ENCODE measurements at regions of chr13 and their contacts with region 1.

Region 1: DNA sequence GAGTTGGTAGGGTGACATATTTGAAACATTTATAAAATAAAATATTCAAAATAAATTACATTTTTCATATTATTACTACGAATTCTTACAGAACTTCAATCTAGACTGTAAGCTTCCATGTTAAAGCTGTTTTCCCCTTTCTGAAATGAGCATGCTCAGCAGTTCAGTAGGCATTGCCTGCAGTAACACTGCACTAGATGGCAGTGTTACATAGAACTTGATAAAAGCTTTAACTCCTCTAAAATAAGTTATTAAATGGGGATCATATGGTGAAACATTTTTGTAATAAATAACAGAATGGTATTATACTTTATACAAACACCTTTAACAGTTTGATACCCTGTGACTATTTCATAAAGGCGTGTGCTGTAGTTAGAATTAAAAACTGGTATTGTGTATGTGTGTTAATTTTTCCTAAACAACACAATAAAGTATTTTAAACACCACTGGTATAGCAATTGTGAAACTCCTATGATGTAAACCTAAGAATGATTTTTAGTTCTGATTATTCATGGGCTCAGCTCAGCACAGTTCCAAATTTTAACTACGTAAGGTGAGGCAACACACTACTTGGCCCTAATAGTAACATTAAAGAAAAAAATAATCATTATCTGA is 11.6 kb upstream of the GPR18 start:
- DNase-seq: no peak
- ATAC-seq: peak; percentile 89
- H3K4me3 ChIP-seq: no peak overlapping the region
- H3K27ac ChIP-seq: peak overlapping the region; percentile 37; the same call in 1 of the 2 replicates
- H3K4me1 ChIP-seq: peaks cover 24% of the 10 kb centered on the region
- H3K27me3 ChIP-seq: no peaks in the 10 kb centered on the region
- CTCF ChIP-seq: peak; percentile 74 to 85 (median 81)
- EP300 ChIP-seq: no peak
- POLR2A ChIP-seq: no peak
- RAD21 ChIP-seq: peak; percentile 91

Region 2: GRCh38 chr13:98664039-98664438 is 605.7 kb before region 1 on chr13:
- CTCF ChIA-PET with region 1: no interaction called
- POLR2A ChIA-PET with region 1: no interaction called
- RAD21 ChIA-PET with region 1: no interaction called
- SMC1A ChIA-PET with region 1: no interaction called
- in situ Hi-C with region 1: no loop called
- intact Hi-C with region 1: no loop called
- DNase-seq: no peak
- ATAC-seq: peak; percentile 29
- H3K4me3 ChIP-seq: no peak overlapping the region
- H3K27ac ChIP-seq: no peak overlapping the region
- H3K4me1 ChIP-seq: no peaks in the 10 kb centered on the region
- H3K27me3 ChIP-seq: no peaks in the 10 kb centered on the region
- CTCF ChIP-seq: no peak
- EP300 ChIP-seq: no peak
- POLR2A ChIP-seq: no peak
- RAD21 ChIP-seq: no peak

Region 3: DNA sequence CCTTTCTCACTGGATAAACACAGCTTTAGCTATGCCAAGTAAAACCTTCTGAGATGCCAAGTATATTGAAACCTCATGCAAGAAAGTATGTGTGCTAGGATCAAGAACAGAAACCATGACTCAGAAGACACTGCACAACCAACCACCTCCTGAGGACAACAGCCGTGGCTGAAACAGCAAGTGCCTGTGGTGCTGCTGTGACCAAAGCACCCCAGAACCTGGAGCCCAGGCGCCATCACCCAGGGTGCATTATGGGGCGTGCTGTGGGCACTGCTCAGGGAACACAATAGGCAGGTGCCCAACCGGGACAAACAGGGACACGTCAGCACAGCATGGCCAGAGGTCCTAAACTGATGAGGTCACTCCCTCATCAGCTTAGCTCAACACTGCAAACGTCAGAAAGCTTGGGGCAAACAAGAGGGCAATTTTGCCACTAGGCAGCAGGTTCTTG is 415.9 kb before region 1 on chr13:
- CTCF ChIA-PET with region 1: interaction called, 4 read pairs
- POLR2A ChIA-PET with region 1: no interaction called
- RAD21 ChIA-PET with region 1: no interaction called
- SMC1A ChIA-PET with region 1: interaction called, 3 read pairs
- in situ Hi-C with region 1: loop called (anchors 10 kb)
- intact Hi-C with region 1: no loop called
- DNase-seq: peak; percentile 80
- ATAC-seq: peak; percentile 100
- H3K4me3 ChIP-seq: no peak overlapping the region
- H3K27ac ChIP-seq: no peak overlapping the region
- H3K4me1 ChIP-seq: peaks cover 9% of the 10 kb centered on the region
- H3K27me3 ChIP-seq: no peaks in the 10 kb centered on the region
- CTCF ChIP-seq: no peak
- EP300 ChIP-seq: peak in 1 of 2 experiments; percentile 38; a peak in 2 of 4 replicates
- POLR2A ChIP-seq: no peak
- RAD21 ChIP-seq: no peak

Region 4: DNA sequence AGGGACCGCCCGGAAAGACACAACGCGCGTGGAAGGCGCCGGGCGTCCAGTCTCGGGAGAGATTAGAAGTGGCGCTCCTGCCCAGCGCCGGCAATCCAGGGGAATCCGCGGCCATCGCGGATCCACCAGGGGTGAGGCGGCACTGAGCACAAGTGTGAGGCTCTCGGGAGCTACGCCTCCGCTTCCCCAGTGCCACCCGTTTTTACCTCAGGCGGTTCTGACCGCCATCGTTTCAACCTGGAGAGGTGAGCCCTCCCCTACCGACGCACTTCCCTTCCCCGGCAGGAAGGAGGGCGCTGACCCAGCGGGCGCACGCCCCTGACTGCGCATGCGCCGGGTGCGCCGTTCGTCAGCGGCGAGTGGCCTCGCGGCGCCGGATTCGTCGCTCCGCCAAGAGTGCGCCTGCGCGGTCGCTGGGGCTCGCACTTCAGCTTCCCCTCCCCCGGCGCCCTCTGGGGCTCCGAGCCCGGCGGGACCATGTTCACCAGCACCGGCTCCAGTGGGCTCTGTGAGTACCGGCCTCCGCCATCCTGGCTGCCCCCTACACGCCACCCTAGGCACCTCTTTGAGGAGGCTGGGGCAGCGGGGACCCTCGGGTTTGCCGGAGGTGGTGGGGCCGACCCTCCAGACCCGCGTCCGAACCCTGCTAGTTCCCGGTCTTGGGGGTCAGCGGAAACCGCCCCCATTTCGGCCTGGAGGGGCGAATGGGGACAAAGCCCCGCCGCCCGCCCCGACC is 69.1 kb before region 1 on chr13 and contains the start of gene UBAC2:
- CTCF ChIA-PET with region 1: interaction called, 172 read pairs
- POLR2A ChIA-PET with region 1: interaction called, 9 read pairs
- RAD21 ChIA-PET with region 1: interaction called, 94 read pairs
- SMC1A ChIA-PET with region 1: interaction called, 184 read pairs
- in situ Hi-C with region 1: no loop called
- intact Hi-C with region 1: no loop called
- DNase-seq: peak; percentile 89
- ATAC-seq: peak; percentile 86
- H3K4me3 ChIP-seq: peak within 1 kb of the TSS; percentile 94
- H3K27ac ChIP-seq: peak within 1 kb of the TSS; percentile 84
- H3K4me1 ChIP-seq: peaks cover 29% of the 10 kb centered on the region
- H3K27me3 ChIP-seq: no peaks in the 10 kb centered on the region
- CTCF ChIP-seq: 0 out of 6 replicates have a peak, but pooled peaks of 1 of the 3 experiments have one; percentile 2
- EP300 ChIP-seq: 0 out of 4 replicates have a peak, but pooled peaks of 1 of the 2 experiments have one; percentile 7
- POLR2A ChIP-seq: peak; percentile 100
- RAD21 ChIP-seq: no peak
- polyA plus RNA-seq, gene UBAC2: 3.0 to 4.1 TPM

Region 5: DNA sequence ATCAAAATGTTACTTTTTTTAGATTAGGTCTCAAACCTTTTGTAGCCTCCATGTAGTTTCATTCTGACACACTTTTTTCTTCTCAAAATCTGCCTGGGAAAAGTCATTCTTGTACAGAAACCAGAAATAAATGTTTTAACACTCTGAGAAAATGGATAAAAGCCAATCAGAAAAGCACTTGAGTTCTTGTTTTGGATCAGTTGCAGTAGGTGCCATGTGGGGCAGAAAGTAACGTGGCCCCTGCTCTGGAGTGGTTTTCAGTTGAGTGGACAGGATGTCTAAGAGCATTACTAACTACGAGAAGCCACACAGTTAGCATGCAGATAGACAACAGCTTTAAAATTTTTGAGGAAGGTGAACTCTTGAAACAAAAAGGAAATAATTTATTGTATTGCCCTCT is 18.4 kb after region 1 on chr13:
- CTCF ChIA-PET with region 1: interaction called, 54 read pairs
- POLR2A ChIA-PET with region 1: interaction called, 6 read pairs
- RAD21 ChIA-PET with region 1: interaction called, 106 read pairs
- SMC1A ChIA-PET with region 1: interaction called, 132 read pairs
- in situ Hi-C with region 1: no loop called
- intact Hi-C with region 1: loop called (anchors 2 kb)
- DNase-seq: peak; percentile 93
- ATAC-seq: peak; percentile 91
- H3K4me3 ChIP-seq: no peak overlapping the region
- H3K27ac ChIP-seq: peak overlapping the region; percentile 76
- H3K4me1 ChIP-seq: peaks cover 46% of the 10 kb centered on the region
- H3K27me3 ChIP-seq: no peaks in the 10 kb centered on the region
- CTCF ChIP-seq: no peak
- EP300 ChIP-seq: 0 out of 4 replicates have a peak, but pooled peaks of 1 of the 2 experiments have one; percentile 36
- POLR2A ChIP-seq: no peak
- RAD21 ChIP-seq: peak; percentile 22; the same call in 1 of the 2 replicates

Region 6: GRCh38 chr13:99331881-99332293 is 62.2 kb after region 1 on chr13:
- CTCF ChIA-PET with region 1: interaction called, 28 read pairs
- POLR2A ChIA-PET with region 1: interaction called, 6 read pairs
- RAD21 ChIA-PET with region 1: interaction called, 35 read pairs
- SMC1A ChIA-PET with region 1: interaction called, 70 read pairs
- in situ Hi-C with region 1: no loop called
- intact Hi-C with region 1: no loop called
- DNase-seq: peak; percentile 79
- ATAC-seq: peak; percentile 89
- H3K4me3 ChIP-seq: no peak overlapping the region
- H3K27ac ChIP-seq: peak overlapping the region; percentile 66; the same call in 1 of the 2 replicates
- H3K4me1 ChIP-seq: peaks cover 21% of the 10 kb centered on the region
- H3K27me3 ChIP-seq: no peaks in the 10 kb centered on the region
- CTCF ChIP-seq: no peak
- EP300 ChIP-seq: peak; percentile 39 to 52; a peak in 2 of 4 replicates
- POLR2A ChIP-seq: no peak
- RAD21 ChIP-seq: no peak

Region 7: GRCh38 chr13:99386911-99387788 is 117.4 kb after region 1 on chr13:
- CTCF ChIA-PET with region 1: interaction called, 440 read pairs
- POLR2A ChIA-PET with region 1: interaction called, 8 read pairs
- RAD21 ChIA-PET with region 1: interaction called, 182 read pairs
- SMC1A ChIA-PET with region 1: interaction called, 306 read pairs
- in situ Hi-C with region 1: no loop called
- intact Hi-C with region 1: loop called (anchors 1 kb)
- DNase-seq: peak; percentile 66
- ATAC-seq: peak; percentile 93
- H3K4me3 ChIP-seq: no peak overlapping the region
- H3K27ac ChIP-seq: peak overlapping the region; percentile 41; the same call in 1 of the 2 replicates
- H3K4me1 ChIP-seq: peaks cover 26% of the 10 kb centered on the region
- H3K27me3 ChIP-seq: no peaks in the 10 kb centered on the region
- CTCF ChIP-seq: peak; percentile 95 to 99 (median 96)
- EP300 ChIP-seq: no peak
- POLR2A ChIP-seq: no peak
- RAD21 ChIP-seq: peak; percentile 99

Region 8: GRCh38 chr13:99501184-99501847 is 231.6 kb after region 1 on chr13 and contains the start of gene TM9SF2:
- CTCF ChIA-PET with region 1: interaction called, 32 read pairs
- POLR2A ChIA-PET with region 1: interaction called, 4 read pairs
- RAD21 ChIA-PET with region 1: interaction called, 44 read pairs
- SMC1A ChIA-PET with region 1: interaction called, 94 read pairs
- in situ Hi-C with region 1: no loop called
- intact Hi-C with region 1: loop called (anchors 2 kb)
- DNase-seq: peak; percentile 90
- ATAC-seq: peak; percentile 72
- H3K4me3 ChIP-seq: peak within 1 kb of the TSS; percentile 93
- H3K27ac ChIP-seq: peak within 1 kb of the TSS; percentile 91
- H3K4me1 ChIP-seq: peaks cover 12% of the 10 kb centered on the region
- H3K27me3 ChIP-seq: no peaks in the 10 kb centered on the region
- CTCF ChIP-seq: no peak
- EP300 ChIP-seq: no peak
- POLR2A ChIP-seq: peak; percentile 77
- RAD21 ChIP-seq: no peak
- polyA plus RNA-seq, gene TM9SF2: 34.6 to 42.5 TPM